ENCODE measurements at regions of chr1 and their contacts with region 1.

Region 1: GRCh38 chr1:238073991-238074390 is 183.3 kb upstream of the ZP4 start:
- DNase-seq: no peak
- ATAC-seq: no peak
- H3K4me3 ChIP-seq: no peak overlapping the region
- H3K27ac ChIP-seq: no peak overlapping the region
- H3K4me1 ChIP-seq: no peaks in the 10 kb centered on the region
- H3K27me3 ChIP-seq: no peaks in the 10 kb centered on the region
- CTCF ChIP-seq: no peak

Region 2: GRCh38 chr1:237650809-237651208 is 423.2 kb before region 1 on chr1:
- intact Hi-C with region 1: loop called in 1 of 10 experiments (anchors 5 kb)
- DNase-seq: no peak
- ATAC-seq: no peak
- H3K4me3 ChIP-seq: no peak overlapping the region
- H3K27ac ChIP-seq: no peak overlapping the region
- H3K4me1 ChIP-seq: peaks cover 0 to 11% (median 0%) of the 10 kb centered on the region in 9 donors
- H3K27me3 ChIP-seq: no peaks in the 10 kb centered on the region
- CTCF ChIP-seq: no peak

Region 3: DNA sequence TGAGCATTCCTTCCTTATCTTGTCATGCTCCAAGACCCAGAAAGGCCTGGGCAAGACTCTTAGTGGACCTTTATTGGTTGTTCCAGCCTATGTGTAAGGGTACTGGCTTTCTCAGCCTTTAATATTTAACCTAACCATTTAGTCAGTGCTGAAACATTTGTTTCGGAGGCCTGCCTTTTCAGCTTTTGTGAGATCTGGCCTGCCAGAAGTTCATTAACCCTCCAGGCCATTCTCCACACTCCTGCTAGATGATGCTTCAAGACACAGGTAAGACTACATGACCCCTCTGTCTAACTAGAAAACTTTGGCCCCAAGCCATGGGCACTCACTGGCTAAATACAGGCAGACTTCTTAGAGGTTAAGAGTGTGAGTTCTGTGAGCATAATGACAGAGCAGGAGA is 44.9 kb before region 1 on chr1:
- intact Hi-C with region 1: no loop called
- DNase-seq: no peak
- ATAC-seq: no peak
- H3K4me3 ChIP-seq: no peak overlapping the region
- H3K27ac ChIP-seq: no peak overlapping the region
- H3K4me1 ChIP-seq: no peaks in the 10 kb centered on the region
- H3K27me3 ChIP-seq: peaks cover 0 to 3% (median 0%) of the 10 kb centered on the region in 7 donors
- CTCF ChIP-seq: no peak

Region 4: GRCh38 chr1:240056350-240056749 is 1982.4 kb after region 1 on chr1:
- intact Hi-C with region 1: loop called in 1 of 10 experiments (anchors 5 kb)
- DNase-seq: no peak
- ATAC-seq: no peak
- H3K4me3 ChIP-seq: no peak overlapping the region
- H3K27ac ChIP-seq: no peak overlapping the region
- H3K4me1 ChIP-seq: no peaks in the 10 kb centered on the region
- H3K27me3 ChIP-seq: no peaks in the 10 kb centered on the region
- CTCF ChIP-seq: no peak

Measured in heart right ventricle (tissue), 16 donors.